BJ (cell line): ENCODE measurements at regions of chr1 and their contacts with region 1.

Region 1: GRCh38 chr1:54488779-54489626 is 59.0 kb upstream of the ACOT11 start:
- DNase-seq: no peak
- H3K4me3 ChIP-seq: peak overlapping the region; percentile 52
- H3K27me3 ChIP-seq: no peaks in the 10 kb centered on the region
- CTCF ChIP-seq: peak; percentile 88

Region 2: DNA sequence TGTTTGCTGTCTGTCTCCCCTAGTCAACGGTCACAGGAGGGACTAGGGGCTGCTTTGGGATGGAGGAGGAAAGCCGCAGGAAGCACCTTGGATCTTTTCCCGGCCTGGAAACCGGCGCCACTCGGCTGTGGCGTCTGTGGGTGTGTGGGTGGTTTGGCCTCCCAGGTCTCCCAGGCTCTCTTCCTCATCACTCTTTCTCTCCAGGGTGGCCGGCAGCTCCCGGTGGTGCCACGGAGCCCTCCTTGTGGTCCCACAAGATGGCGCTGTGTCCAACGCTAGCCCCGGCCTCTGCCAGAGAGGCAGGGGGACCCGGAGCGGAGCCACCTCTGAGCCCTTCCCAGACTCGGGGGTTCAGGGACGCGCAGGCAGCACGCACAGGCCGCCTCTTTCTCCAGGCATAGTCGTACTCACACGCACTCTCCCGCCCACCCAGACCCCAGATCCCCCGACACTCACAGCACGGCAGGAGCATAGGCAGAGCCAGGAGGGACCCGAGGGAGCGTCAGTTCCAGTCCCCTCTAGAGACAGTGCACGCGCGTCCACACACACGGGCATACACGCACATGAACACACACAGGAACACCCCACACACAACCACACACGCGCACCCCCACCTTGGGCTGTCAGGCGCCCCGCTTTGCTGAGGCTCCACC is 367.4 kb before region 1 on chr1:
- CTCF ChIA-PET with region 1: interaction called, 14 read pairs
- POLR2A ChIA-PET with region 1: interaction called, 13 read pairs
- DNase-seq: no peak
- H3K4me3 ChIP-seq: peak overlapping the region; percentile 5; the same call in 1 of the 2 replicates
- H3K27me3 ChIP-seq: no peaks in the 10 kb centered on the region
- CTCF ChIP-seq: peak; percentile 88

Region 3: GRCh38 chr1:54263601-54264226 is 225.3 kb before region 1 on chr1:
- CTCF ChIA-PET with region 1: interaction called, 5 read pairs
- POLR2A ChIA-PET with region 1: interaction called, 13 read pairs
- DNase-seq: no peak
- H3K4me3 ChIP-seq: no peak overlapping the region
- H3K27me3 ChIP-seq: no peaks in the 10 kb centered on the region
- CTCF ChIP-seq: no peak

Region 4: DNA sequence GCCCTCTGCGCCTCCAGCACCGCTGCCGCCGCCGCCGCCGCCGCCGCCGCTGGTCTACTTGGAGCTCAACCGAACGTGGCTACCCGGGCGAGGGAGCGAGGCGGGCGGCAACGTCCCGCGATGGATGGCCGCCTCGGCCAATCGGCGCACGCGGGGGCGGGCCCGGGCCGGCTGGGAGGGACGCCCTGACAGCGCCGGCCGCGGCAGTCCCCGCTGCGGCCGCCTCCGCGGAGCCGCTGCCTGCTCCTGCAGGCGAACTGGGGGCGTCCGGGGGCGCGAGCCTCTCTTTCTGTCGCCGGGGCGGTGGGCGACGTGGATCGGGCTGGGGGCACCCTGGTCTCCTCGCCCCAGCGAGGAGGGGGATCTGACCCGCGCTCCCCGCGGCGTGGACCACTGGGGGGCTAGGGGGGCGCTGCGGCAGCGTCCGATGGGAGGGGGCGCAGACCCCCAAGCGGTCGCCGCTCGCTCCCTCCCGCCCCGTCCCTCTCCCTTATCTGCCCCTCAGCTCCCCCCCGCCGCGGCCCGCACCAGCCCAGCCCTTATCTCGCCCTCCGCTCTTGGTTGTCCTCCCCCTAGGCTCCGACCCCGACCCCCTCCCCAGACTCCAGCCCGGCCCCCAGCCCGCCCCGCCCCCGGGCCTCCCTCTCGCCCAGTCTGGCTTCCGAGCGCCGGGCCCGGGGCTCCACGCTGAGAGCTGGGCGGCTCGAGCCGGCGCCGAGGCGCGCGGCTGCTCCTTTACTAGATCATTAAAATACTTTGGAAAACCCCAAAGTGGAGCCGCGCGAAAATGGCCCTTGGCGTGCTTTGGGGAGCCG is 82.5 kb before region 1 on chr1 and contains the start of gene SSBP3:
- CTCF ChIA-PET with region 1: interaction called, 14 read pairs
- POLR2A ChIA-PET with region 1: interaction called, 10 read pairs
- DNase-seq: no peak
- H3K4me3 ChIP-seq: peak within 1 kb of the TSS; percentile 82
- H3K27me3 ChIP-seq: no peaks in the 10 kb centered on the region
- CTCF ChIP-seq: no peak
- polyA plus RNA-seq, gene SSBP3: 19.6 and 25.9 TPM in 2 replicates

Region 5: DNA sequence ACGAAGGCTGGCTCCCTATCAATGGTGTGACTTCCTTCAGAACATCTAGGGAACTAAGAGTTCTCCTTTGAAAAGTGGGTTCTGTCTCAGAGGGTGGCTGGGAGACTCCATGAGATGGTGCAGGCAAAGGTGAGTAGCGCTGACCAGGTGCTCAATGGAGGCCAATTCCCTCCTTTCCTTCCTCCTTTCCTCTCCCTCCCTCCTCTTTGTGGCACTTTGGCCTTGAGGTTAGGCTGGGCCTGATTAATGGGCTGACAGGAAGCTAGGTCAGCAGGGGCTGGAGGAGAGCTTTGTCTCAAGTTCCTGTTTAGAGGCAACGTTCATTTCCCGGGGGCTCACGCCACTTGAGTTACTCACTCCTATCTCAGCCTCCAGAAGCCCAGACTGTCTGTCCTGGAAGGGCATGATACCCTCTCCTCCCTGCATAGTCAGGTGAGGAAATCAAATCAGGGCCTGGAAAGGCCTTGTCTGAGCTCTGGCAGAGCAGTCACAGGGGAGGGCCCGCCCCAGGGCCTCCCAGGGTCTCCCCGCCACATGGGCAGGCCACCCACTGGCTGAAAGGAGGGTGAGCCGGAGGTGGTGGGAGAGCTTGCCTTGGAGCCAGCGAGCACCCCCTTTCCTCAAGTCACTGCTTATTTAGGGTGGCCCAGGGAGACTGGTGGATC is 24.4 kb before region 1 on chr1:
- CTCF ChIA-PET with region 1: no interaction called
- POLR2A ChIA-PET with region 1: no interaction called
- DNase-seq: no peak
- H3K4me3 ChIP-seq: no peak overlapping the region
- H3K27me3 ChIP-seq: no peaks in the 10 kb centered on the region
- CTCF ChIP-seq: no peak

Region 6: GRCh38 chr1:54528613-54529012 is 39.6 kb after region 1 on chr1:
- CTCF ChIA-PET with region 1: no interaction called
- POLR2A ChIA-PET with region 1: interaction called, 11 read pairs
- DNase-seq: no peak
- H3K4me3 ChIP-seq: no peak overlapping the region
- H3K27me3 ChIP-seq: no peaks in the 10 kb centered on the region
- CTCF ChIP-seq: no peak